Caco-2 (cell line): ENCODE measurements at regions of chr7 and their contacts with region 1.

Region 1: GRCh38 chr7:264541-265191 is 25.3 kb upstream of the FOXL3 start:
- DNase-seq: peak in 1 of 2 experiments; percentile 17
- H3K4me3 ChIP-seq: no peak overlapping the region
- H3K4me3 Mint-ChIP-seq: no peak overlapping the region
- H3K27ac Mint-ChIP-seq: no peak overlapping the region
- H3K4me1 ChIP-seq: no peaks in the 10 kb centered on the region
- H3K4me1 Mint-ChIP-seq: peaks cover 6% of the 10 kb centered on the region
- H3K27me3 ChIP-seq: no peaks in the 10 kb centered on the region
- H3K27me3 Mint-ChIP-seq: no peaks in the 10 kb centered on the region
- CTCF ChIP-seq: no peak

Region 2: DNA sequence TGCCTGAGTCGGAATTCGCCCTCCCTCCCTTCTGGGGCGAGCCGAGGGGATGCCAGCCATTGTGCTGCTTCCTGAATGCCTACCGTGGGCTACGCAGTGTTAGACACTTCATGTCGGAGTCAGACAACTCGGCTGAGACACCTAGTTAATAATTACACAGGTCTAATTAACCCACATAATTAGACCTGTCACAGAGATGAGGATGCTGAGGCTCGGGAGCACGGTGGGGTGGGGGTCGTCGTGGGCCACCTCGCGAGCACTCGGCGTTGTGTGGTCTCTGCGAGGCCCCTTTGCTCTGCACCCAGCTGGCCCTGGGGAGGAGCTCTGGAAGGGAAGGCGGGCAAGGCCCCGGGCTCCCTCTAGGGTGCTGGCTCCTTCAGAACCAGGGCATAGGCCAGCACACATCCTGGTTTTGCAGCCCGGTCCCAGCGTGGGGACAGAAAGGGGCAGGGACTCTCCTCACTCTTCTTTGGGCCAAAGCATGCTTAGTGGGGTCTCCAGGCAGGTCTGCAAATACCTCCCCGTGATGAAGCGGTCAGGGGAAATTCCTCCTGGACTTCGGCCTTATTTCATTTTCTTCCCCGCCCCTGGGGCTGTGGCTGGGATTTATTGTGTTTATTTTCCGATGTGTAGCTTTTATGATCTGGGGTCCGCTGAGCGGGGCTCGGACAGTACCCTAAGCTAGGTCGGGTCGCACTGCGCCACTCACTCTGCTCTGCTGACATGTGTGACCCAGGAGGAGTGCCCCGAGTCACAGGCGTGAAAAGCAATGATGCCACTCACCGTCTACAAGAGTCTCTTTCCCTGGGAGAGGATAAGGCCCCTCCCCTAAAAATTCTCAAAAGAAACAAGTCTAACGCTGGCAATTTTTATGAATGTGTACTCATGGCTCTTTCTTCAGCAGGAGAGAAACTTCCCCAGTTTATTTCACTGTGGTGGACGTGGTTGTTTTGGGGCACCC is 20.4 kb after region 1 on chr7:
- CTCF ChIA-PET with region 1: interaction called, 4 read pairs
- POLR2A ChIA-PET with region 1: no interaction called
- intact Hi-C with region 1: loop called (anchors 2 kb)
- DNase-seq: peak; percentile 62 to 67
- H3K4me3 ChIP-seq: peak overlapping the region; percentile 16
- H3K4me3 Mint-ChIP-seq: peak overlapping the region; percentile 72
- H3K27ac Mint-ChIP-seq: peak overlapping the region; percentile 82
- H3K4me1 ChIP-seq: peaks cover 16% of the 10 kb centered on the region
- H3K4me1 Mint-ChIP-seq: peaks cover 26% of the 10 kb centered on the region
- H3K27me3 ChIP-seq: no peaks in the 10 kb centered on the region
- H3K27me3 Mint-ChIP-seq: no peaks in the 10 kb centered on the region
- CTCF ChIP-seq: peak in 1 of 2 experiments; percentile 6

Region 3: GRCh38 chr7:305410-306151 is 40.9 kb after region 1 on chr7:
- CTCF ChIA-PET with region 1: no interaction called
- POLR2A ChIA-PET with region 1: no interaction called
- intact Hi-C with region 1: no loop called
- DNase-seq: peak in 1 of 2 experiments; percentile 25
- H3K4me3 ChIP-seq: no peak overlapping the region
- H3K4me3 Mint-ChIP-seq: no peak overlapping the region
- H3K27ac Mint-ChIP-seq: no peak overlapping the region
- H3K4me1 ChIP-seq: no peaks in the 10 kb centered on the region
- H3K4me1 Mint-ChIP-seq: peaks cover 6% of the 10 kb centered on the region
- H3K27me3 ChIP-seq: no peaks in the 10 kb centered on the region
- H3K27me3 Mint-ChIP-seq: no peaks in the 10 kb centered on the region
- CTCF ChIP-seq: no peak

Region 4: GRCh38 chr7:768881-769504 is 504.3 kb after region 1 on chr7:
- CTCF ChIA-PET with region 1: no interaction called
- POLR2A ChIA-PET with region 1: no interaction called
- intact Hi-C with region 1: no loop called
- DNase-seq: peak in 1 of 2 experiments; percentile 19
- H3K4me3 ChIP-seq: no peak overlapping the region
- H3K4me3 Mint-ChIP-seq: no peak overlapping the region
- H3K27ac Mint-ChIP-seq: peak overlapping the region; percentile 39
- H3K4me1 ChIP-seq: peaks cover 24% of the 10 kb centered on the region
- H3K4me1 Mint-ChIP-seq: peaks cover 7% of the 10 kb centered on the region
- H3K27me3 ChIP-seq: no peaks in the 10 kb centered on the region
- H3K27me3 Mint-ChIP-seq: no peaks in the 10 kb centered on the region
- CTCF ChIP-seq: no peak